Lower lobe of right lung (tissue), 2 donors: ENCODE measurements at regions of chr12 and their contacts with region 1.

Region 1: DNA sequence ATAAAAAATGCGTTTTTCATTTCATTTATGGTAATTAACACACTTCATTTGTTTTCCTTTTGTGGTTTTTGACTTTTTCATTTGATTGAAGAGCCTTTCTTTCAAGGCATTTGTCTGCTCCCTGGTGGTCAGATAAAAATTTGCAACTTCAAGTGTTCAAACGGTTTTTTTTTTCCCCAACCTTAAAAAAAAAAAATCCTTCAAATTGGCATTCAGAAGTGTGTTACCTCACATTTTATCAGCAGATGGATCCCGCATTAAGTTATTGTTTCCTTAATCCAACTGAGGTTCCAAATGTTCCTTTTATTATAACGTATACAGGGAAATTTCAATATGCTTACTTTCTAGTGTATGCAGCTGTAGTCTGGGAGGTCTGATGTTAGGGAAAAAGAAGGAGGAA is 47.2 kb downstream of the MYF5 start:
- DNase-seq: no peak
- ATAC-seq: no peak
- H3K4me3 ChIP-seq: no peak overlapping the region
- H3K27ac ChIP-seq: no peak overlapping the region
- H3K4me1 ChIP-seq: no peaks in the 10 kb centered on the region
- H3K27me3 ChIP-seq: no peaks in the 10 kb centered on the region
- CTCF ChIP-seq: peak; percentile 59

Region 2: DNA sequence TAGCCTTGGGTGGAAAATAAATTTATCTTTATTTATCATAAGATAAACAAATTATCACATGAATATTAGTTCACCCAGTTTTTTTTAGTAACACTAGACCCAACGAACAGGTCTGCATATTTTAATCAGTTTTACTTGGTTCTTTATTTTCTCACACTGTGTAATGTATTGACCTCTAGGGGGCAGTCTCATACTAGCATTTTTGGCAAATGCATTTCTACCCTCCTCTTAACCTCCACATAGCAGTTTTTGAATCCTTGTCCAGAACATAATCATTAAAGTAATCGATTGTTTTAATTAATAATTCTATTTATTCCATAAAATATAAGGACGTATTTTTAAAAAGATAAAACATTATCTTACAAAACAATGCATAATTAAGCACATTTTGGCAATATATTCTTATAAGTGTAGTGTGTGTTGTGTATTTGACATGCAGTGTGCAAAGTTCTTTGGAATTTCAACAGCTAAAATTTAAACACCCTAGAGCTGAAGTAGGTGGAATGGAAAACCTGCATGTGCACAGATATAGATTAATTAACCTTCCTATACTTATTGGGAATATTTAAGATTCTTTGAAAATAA is 351.4 kb before region 1 on chr12:
- intact Hi-C with region 1: loop called (anchors 10 kb)
- DNase-seq: no peak
- ATAC-seq: peak; percentile 71 to 78
- H3K4me3 ChIP-seq: no peak overlapping the region
- H3K27ac ChIP-seq: no peak overlapping the region
- H3K4me1 ChIP-seq: no peaks in the 10 kb centered on the region
- H3K27me3 ChIP-seq: no peaks in the 10 kb centered on the region
- CTCF ChIP-seq: peak; percentile 80